Left cardiac atrium (tissue), 4 donors: ENCODE measurements at regions of chr13 and their contacts with region 1.

Region 1: DNA sequence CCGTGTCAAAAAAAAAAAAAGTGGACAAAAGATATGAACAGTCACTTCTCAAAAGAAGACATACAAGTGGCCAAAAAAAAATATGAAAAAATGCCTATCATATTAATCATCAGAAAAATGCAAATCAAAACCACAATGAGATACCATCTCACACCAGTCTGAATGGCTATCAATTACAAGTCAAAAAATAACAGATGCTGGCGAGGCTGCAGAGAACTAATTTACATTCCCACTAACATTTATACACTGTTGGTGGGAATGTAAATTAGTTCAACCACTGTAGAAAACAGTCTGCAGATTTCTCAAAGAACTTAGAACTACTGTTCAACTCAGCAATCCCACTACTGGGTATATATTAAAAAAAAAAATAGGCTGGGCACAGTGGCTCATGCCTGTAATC is 26.5 kb upstream of the FOXO1 start:
- DNase-seq: no peak
- ATAC-seq: no peak

Region 2: GRCh38 chr13:39684531-39685137 is 1008.3 kb before region 1 on chr13:
- intact Hi-C with region 1: loop called in 1 of 2 experiments (anchors 5 kb)
- DNase-seq: no peak
- ATAC-seq: no peak

Region 3: DNA sequence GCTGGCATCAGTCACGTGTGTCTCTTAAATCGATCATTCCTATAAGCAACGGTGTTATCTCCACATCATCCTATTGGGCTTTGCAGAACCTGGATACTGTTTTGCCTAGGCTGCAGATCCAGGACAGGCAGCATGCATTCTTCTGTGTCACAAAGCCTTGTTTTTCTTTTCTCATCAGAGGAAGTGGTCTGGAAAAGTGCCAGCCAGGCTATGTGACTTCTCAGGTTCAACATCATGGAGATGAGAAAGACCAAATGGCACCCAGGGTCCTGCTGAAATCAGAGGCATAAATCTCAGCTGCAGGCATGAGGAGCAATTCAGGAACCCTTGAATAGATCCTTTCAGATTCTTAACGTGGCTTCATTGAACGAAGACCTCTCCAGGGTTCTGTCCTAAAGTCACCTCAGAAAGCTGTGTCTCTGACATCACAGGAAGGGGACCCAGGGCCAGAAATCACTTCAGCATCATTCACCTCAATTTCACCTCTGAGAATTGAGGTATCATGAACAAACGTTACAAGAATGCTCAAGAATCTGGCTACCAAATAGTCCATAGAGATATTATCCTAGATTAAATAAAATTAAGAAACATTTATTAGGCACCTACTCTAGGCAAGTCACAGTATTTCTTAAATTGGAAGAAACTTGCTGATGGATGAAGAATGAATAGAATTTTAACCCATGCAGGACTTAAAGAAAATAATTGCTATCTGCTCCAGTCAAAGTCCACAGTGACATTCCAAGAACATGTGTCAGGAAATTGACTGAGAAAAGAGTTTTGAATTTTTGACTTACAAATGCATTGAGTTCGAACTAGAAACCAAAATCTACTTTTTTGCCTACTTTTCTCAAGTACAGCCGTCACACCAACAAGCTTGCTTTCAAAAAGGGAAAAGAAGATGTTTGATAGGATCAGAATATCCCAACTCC is 913.3 kb before region 1 on chr13:
- intact Hi-C with region 1: loop called in 1 of 2 experiments (anchors 5 kb)
- DNase-seq: no peak
- ATAC-seq: no peak

Region 4: DNA sequence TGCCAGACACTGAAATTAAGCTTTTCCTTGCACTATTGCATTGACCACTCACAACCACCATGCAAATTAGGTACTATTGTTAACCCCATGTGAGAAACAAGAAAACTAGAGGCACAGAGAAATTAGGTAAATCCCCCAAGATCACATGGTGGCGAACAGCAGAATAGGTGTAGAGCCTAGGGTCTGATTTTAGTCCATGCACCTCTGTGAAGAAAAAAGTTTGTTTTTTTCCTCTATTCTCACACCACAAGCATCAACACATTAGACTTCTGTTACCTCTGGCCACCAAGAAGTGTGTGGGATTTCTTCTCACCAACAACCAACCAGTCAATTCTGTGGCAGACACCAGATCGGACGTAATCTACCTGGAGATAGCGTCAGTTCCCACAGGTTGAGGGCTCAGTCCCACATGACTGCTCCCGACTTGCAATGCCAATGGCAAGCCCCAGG is 645.6 kb before region 1 on chr13:
- intact Hi-C with region 1: loop called in 1 of 2 experiments (anchors 10 kb)
- DNase-seq: no peak
- ATAC-seq: no peak